Heart right ventricle (tissue), 16 donors: ENCODE measurements at regions of chr3 and their contacts with region 1.

Region 1: GRCh38 chr3:132722164-132723024 is at the start of gene NPHP3:
- DNase-seq: peak; percentile 99
- ATAC-seq: peak; percentile 92 to 96 (median 94)
- H3K4me3 ChIP-seq: peak within 1 kb of the TSS; percentile 32 to 95 (median 84)
- H3K27ac ChIP-seq: peak within 1 kb of the TSS; percentile 88 to 99 (median 98)
- H3K4me1 ChIP-seq: peaks cover 9 to 48% (median 37%) of the 10 kb centered on the region in 9 donors
- H3K27me3 ChIP-seq: no peaks in the 10 kb centered on the region
- CTCF ChIP-seq: peak in 2 of 9 donors; percentile 10 to 15
- total RNA-seq, gene NPHP3: 6.6 to 13.7 (median 10.2) TPM

Region 2: GRCh38 chr3:132690040-132690439 is 32.4 kb before region 1 on chr3:
- intact Hi-C with region 1: no loop called
- DNase-seq: no peak
- ATAC-seq: peak in 2 of 8 donors; percentile 49 to 65
- H3K4me3 ChIP-seq: no peak overlapping the region
- H3K27ac ChIP-seq: peak overlapping the region in 6 of 10 donors; percentile 1 to 41 (median 31)
- H3K4me1 ChIP-seq: no peaks in the 10 kb centered on the region
- H3K27me3 ChIP-seq: no peaks in the 10 kb centered on the region
- CTCF ChIP-seq: no peak

Region 3: DNA sequence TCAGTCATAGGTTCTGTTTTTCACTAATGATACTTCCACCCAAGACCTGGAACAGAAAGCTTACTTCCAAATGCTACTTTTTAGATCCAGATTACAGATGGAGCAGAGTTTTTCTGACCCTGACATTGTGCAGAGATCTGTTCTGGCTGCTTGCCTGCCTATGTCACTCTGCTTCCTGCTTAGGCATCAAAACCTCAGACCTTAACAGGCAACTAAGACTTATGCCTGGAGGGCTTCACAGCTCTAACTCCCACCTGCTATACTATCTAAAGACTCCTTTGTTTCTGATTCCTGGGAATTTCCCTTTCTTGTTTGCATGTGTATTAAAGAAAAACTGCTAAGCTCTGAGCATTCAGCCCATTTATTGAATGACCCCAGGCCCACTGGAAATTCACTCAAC is 157.2 kb after region 1 on chr3:
- intact Hi-C with region 1: no loop called
- DNase-seq: no peak
- ATAC-seq: no peak
- H3K4me3 ChIP-seq: no peak overlapping the region
- H3K27ac ChIP-seq: no peak overlapping the region
- H3K4me1 ChIP-seq: no peaks in the 10 kb centered on the region
- H3K27me3 ChIP-seq: no peaks in the 10 kb centered on the region
- CTCF ChIP-seq: no peak

Region 4: DNA sequence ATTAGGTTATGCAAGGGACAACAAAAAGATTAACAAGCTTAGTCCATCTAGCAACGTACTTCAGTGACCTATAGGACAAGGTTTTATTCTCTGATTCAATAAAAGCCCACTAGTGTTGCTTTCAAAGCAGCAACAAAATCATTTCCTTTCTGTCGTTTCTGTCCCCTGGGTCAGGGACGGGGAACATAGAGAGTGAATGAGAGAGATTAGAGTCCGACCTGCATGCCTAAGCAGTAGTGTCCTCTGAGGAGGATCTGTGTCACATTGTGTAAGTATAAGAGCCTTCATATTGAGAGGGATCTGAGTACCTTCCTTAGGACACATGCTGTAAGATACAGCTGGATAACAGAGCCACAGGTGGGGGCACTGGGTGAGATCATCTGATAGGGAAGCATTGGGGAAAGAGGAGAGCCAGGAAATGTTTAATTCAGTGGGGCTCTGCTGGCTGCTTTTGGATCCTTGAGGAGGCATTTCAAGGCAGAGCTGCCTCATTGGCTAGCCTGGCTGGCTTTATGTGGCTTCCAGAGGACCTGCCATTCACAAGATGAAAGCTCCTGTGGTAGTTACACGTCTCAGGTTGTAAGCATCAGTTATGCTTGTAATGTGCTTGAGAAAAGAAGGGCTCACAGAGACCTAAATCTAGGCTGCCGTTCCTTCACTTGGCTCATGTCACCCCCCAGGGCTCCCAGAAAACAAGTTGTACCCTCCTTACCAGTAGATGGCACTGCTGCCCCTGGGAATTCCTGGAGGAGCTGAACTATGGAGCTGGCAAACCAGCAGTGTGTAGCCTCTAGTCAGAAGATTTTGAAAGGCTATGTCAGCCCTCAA is 318.5 kb after region 1 on chr3:
- intact Hi-C with region 1: loop called in 1 of 10 experiments (anchors 5 kb)
- DNase-seq: peak; percentile 51 to 78
- ATAC-seq: peak; percentile 62 to 86 (median 83)
- H3K4me3 ChIP-seq: no peak overlapping the region
- H3K27ac ChIP-seq: peak overlapping the region in 1 of 10 donors; percentile 20
- H3K4me1 ChIP-seq: peaks cover 0 to 24% (median 13%) of the 10 kb centered on the region in 9 donors
- H3K27me3 ChIP-seq: peaks cover 6 to 53% (median 46%) of the 10 kb centered on the region in 7 donors
- CTCF ChIP-seq: peak; percentile 33 to 83 (median 76)

Region 5: GRCh38 chr3:133573054-133573628 is 850.7 kb after region 1 on chr3:
- intact Hi-C with region 1: loop called in 9 of 10 experiments (anchors 2 to 10 kb)
- DNase-seq: peak; percentile 100
- ATAC-seq: peak; percentile 92 to 98 (median 96)
- H3K4me3 ChIP-seq: peak overlapping the region in 9 of 10 donors; percentile 66 to 91 (median 82)
- H3K27ac ChIP-seq: peak overlapping the region; percentile 94 to 98 (median 96)
- H3K4me1 ChIP-seq: peaks cover 5 to 74% (median 53%) of the 10 kb centered on the region in 9 donors
- H3K27me3 ChIP-seq: no peaks in the 10 kb centered on the region
- CTCF ChIP-seq: peak in 6 of 9 donors; percentile 7 to 48 (median 34)

Region 6: GRCh38 chr3:133812872-133813271 is 1090.5 kb after region 1 on chr3:
- intact Hi-C with region 1: loop called in 2 of 10 experiments (anchors 10 kb)
- DNase-seq: no peak
- ATAC-seq: peak in 2 of 8 donors; percentile 37 to 60
- H3K4me3 ChIP-seq: no peak overlapping the region
- H3K27ac ChIP-seq: no peak overlapping the region
- H3K4me1 ChIP-seq: peaks cover 0 to 8% (median 0%) of the 10 kb centered on the region in 9 donors
- H3K27me3 ChIP-seq: no peaks in the 10 kb centered on the region
- CTCF ChIP-seq: no peak

Region 7: GRCh38 chr3:134485718-134486576 is 1763.6 kb after region 1 on chr3 and contains the starts of genes ANAPC13 and CEP63:
- intact Hi-C with region 1: loop called in 1 of 10 experiments (anchors 5 kb)
- DNase-seq: peak; percentile 88 to 97
- ATAC-seq: peak; percentile 91 to 97 (median 94)
- H3K4me3 ChIP-seq: peak within 1 kb of the TSS; percentile 71 to 94 (median 79)
- H3K27ac ChIP-seq: peak within 1 kb of the TSS; percentile 93 to 99 (median 96)
- H3K4me1 ChIP-seq: peaks cover 11 to 53% (median 40%) of the 10 kb centered on the region in 9 donors
- H3K27me3 ChIP-seq: no peaks in the 10 kb centered on the region
- CTCF ChIP-seq: no peak
- total RNA-seq, gene ANAPC13: 68.2 to 119 (median 84.0) TPM
- total RNA-seq, gene CEP63: 27.6 to 38.8 (median 31.0) TPM